ENCODE measurements at regions of chr6 and their contacts with region 1.

Region 1: DNA sequence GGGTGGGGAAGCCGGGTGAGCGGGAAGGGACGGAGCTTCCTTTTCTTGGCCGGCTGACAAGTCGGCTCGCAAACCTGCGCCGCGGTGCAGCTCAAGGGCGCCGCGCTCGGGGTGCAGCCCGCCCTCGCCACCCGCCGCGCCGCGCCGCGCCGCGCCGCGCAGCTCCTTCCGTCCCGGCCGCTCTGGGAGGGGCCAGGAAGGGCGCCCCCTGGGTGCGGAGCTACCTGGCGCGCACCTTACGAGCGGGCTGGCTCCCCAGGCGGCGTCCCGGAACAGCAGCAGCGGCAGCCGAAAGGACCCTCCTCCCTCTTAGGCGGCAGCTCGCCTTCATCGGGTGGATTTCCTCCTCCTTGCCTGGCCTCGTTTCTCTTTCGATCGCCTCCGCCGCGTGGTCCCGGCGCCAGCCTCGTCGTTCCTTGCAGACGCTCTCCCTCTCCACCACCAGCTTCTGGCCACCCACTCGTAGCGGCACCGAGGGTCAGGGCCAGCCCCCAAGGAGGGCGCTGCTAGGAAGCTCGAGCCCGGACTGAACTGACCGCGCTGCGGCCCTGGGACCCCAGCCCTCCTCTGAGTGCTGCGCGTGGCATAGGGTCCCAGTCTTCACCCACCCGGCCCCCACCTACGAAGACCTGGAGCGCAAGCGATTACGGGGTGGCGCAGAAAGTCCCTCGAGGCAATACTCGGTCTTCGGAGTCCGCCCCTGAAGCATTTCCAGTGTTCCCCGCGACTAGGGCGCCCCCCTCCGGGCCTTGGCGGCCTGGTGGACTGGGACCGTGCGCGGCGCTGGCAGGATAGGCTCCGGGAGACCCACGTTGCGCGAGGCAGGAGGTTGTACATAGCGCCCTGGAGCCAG is at the start of gene MAP3K5:
- DNase-seq: peak; percentile 89
- H3K4me3 ChIP-seq: peak within 1 kb of the TSS; percentile 60 to 86 (median 70)
- H3K27ac ChIP-seq: peak within 1 kb of the TSS; percentile 51
- H3K4me1 ChIP-seq: peaks cover 16% of the 10 kb centered on the region
- H3K27me3 ChIP-seq: no peaks in the 10 kb centered on the region
- CTCF ChIP-seq: peak; percentile 85 to 93
- POLR2A ChIP-seq: peak; percentile 23
- total RNA-seq, gene MAP3K5: 5.0 and 7.0 TPM in 2 replicates

Region 2: DNA sequence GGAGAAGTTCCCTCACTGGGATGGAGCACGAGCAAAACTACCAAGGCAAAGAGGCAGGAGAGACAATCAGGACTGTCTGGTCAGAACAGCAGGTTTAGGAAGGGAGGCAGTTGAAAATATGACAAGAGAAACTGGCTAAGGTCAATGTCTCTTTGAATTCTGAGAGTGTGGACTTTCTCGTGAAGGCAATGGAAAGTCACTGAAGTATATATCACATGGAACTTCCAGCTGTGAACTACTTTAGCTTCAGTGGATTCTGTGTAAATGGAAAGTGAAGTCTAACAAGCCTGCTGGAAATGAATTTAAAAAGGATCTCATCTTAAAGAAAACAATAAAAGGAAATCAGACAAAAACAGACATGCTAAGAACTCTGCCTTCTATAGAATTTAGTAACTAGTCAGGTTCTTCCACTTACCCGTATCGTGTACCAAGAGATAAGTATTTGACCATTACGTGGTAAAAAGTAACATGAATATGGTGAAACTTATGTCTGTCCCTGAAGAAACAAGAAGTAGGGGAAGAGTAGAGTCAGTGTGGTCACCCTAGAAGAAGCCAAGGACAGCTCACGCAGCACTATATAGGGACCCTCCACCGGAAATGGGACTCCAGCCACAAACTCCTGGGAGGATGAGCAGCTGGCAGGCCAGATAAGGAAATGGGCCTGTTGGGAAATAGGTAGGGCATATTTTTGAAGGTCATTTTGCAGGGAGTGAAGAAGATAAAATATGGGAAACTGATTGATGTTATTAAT is 365.8 kb before region 1 on chr6:
- CTCF ChIA-PET with region 1: no interaction called
- POLR2A ChIA-PET with region 1: no interaction called
- dilution Hi-C with region 1: no loop called
- intact Hi-C with region 1: no loop called
- DNase-seq: no peak
- H3K4me3 ChIP-seq: no peak overlapping the region
- H3K27ac ChIP-seq: no peak overlapping the region
- H3K4me1 ChIP-seq: no peaks in the 10 kb centered on the region
- H3K27me3 ChIP-seq: peaks cover 2 to 4% of the 10 kb centered on the region in 2 experiments
- CTCF ChIP-seq: no peak
- POLR2A ChIP-seq: no peak

Region 3: GRCh38 chr6:136550330-136551071 is 242.1 kb before region 1 on chr6 and contains the start of gene MAP7:
- CTCF ChIA-PET with region 1: interaction called, 11 read pairs
- POLR2A ChIA-PET with region 1: no interaction called
- dilution Hi-C with region 1: no loop called
- intact Hi-C with region 1: no loop called
- DNase-seq: peak; percentile 30
- H3K4me3 ChIP-seq: peak within 1 kb of the TSS; percentile 37 to 72 (median 46)
- H3K27ac ChIP-seq: no peak within 1 kb of the TSS
- H3K4me1 ChIP-seq: peaks cover 13% of the 10 kb centered on the region
- H3K27me3 ChIP-seq: peaks cover 27 to 36% of the 10 kb centered on the region in 2 experiments
- CTCF ChIP-seq: peak; percentile 56 to 83
- POLR2A ChIP-seq: no peak
- total RNA-seq, gene MAP7: 0.30 and 0.42 TPM in 2 replicates

Region 4: GRCh38 chr6:136607932-136608772 is 184.5 kb before region 1 on chr6:
- CTCF ChIA-PET with region 1: interaction called, 20 read pairs
- POLR2A ChIA-PET with region 1: no interaction called
- dilution Hi-C with region 1: no loop called
- intact Hi-C with region 1: loop called (anchors 1 kb)
- DNase-seq: peak; percentile 61
- H3K4me3 ChIP-seq: no peak overlapping the region
- H3K27ac ChIP-seq: no peak overlapping the region
- H3K4me1 ChIP-seq: peaks cover 43% of the 10 kb centered on the region
- H3K27me3 ChIP-seq: no peaks in the 10 kb centered on the region
- CTCF ChIP-seq: peak; percentile 83 to 85
- POLR2A ChIP-seq: no peak

Region 5: GRCh38 chr6:136643850-136644596 is 148.6 kb before region 1 on chr6:
- CTCF ChIA-PET with region 1: interaction called, 708 read pairs
- POLR2A ChIA-PET with region 1: interaction called, 12 read pairs
- dilution Hi-C with region 1: no loop called
- intact Hi-C with region 1: loop called (anchors 1 kb)
- DNase-seq: peak; percentile 88
- H3K4me3 ChIP-seq: no peak overlapping the region
- H3K27ac ChIP-seq: no peak overlapping the region
- H3K4me1 ChIP-seq: peaks cover 12% of the 10 kb centered on the region
- H3K27me3 ChIP-seq: no peaks in the 10 kb centered on the region
- CTCF ChIP-seq: peak; percentile 85 to 88
- POLR2A ChIP-seq: no peak

Region 6: DNA sequence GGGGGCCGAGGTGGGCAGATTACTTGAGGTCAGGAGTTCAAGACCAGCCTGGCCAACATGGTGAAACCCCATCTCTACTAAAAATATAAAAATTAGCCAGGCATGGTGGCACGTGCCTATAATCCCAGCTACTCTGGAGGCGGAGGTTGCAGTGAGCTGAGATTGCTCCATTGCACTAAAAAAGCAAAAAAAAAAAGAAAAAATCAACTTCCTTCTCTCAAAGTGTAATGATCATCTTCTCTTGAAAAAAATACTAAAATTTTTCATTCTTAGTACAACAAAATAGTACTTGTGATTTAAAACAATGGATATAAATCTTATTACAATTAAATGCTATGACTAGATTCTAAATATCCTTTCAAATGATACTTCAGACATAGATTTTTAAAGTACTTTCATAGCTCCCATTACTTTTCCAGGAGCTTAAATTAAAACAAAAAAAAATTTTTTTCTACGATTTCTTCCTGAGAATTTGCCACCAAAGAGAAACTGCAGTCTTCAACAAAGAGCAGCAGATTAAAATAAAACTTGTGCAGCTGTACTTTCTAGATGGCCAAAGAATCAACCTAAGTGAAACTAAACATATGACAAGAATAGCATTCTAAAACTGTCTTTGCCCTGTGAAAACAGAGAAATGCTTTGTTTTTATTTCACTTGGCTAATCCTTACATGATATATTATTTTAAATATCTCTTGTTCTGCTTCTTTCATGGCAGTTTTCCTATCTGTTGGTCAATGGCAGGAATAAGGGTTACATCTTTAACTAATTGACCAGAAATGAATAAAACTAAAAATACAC is 75.5 kb before region 1 on chr6:
- CTCF ChIA-PET with region 1: interaction called, 62 read pairs
- POLR2A ChIA-PET with region 1: no interaction called
- dilution Hi-C with region 1: no loop called
- intact Hi-C with region 1: loop called (anchors 1 kb)
- DNase-seq: no peak
- H3K4me3 ChIP-seq: peak overlapping the region in 2 of 3 experiments; percentile 9 to 36
- H3K27ac ChIP-seq: peak overlapping the region; percentile 45
- H3K4me1 ChIP-seq: peaks cover 28% of the 10 kb centered on the region
- H3K27me3 ChIP-seq: no peaks in the 10 kb centered on the region
- CTCF ChIP-seq: no peak
- POLR2A ChIP-seq: no peak

Region 7: GRCh38 chr6:136774352-136775041 is 18.1 kb before region 1 on chr6:
- CTCF ChIA-PET with region 1: interaction called, 16 read pairs
- POLR2A ChIA-PET with region 1: no interaction called
- dilution Hi-C with region 1: no loop called
- intact Hi-C with region 1: no loop called
- DNase-seq: peak; percentile 19
- H3K4me3 ChIP-seq: no peak overlapping the region
- H3K27ac ChIP-seq: no peak overlapping the region
- H3K4me1 ChIP-seq: no peaks in the 10 kb centered on the region
- H3K27me3 ChIP-seq: no peaks in the 10 kb centered on the region
- CTCF ChIP-seq: no peak
- POLR2A ChIP-seq: no peak